ENCODE measurements at regions of chr17 and their contacts with region 1.

Region 1: DNA sequence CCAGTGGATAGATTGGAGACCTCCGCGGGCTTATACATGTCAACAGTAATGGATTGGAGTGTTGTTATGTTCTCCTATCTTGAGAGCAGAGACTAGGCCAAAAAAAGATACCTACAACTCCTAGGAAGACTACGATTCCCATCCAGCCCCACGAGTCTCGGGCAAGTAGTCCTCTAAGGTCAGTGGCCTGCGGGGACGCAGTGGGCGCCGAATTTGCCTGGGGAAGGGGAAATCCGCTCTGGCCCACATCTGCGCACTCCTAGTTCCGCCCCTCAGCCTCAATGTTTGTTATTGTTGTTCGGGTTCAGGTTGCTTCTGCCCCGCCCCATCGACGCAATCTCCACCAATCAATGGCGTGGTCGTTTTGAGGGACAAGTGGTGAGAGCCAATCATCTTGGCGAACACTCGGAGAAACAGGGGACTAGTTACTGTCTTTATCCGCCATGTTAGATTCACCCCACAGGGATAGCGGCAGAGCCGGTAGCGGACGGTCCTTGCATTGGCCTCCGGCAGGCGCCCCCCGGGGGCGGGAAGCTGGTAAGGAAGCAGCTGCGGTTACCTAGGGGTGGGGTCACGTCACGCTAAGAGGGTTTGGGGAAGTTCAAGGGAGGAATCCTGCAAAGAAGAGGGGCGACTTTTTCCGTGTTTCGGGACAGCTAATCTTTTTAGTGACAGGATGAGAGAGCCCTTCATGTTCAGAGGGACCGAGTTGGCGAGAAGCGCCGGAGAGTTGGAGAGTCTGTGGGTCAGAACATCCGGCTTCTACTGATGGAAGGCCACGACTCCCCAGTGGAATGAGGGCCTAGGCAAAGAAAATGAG is at the start of gene NBR1:
- DNase-seq: peak; percentile 93 to 96
- ATAC-seq: peak; percentile 91 to 93 (median 92)
- H3K4me3 ChIP-seq: peak within 1 kb of the TSS; percentile 87
- H3K27ac ChIP-seq: peak within 1 kb of the TSS; percentile 91
- H3K4me1 ChIP-seq: peaks cover 40% of the 10 kb centered on the region
- H3K27me3 ChIP-seq: no peaks in the 10 kb centered on the region
- CTCF ChIP-seq: no peak
- total RNA-seq, gene NBR1: 104 to 157 (median 133) TPM

Region 2: DNA sequence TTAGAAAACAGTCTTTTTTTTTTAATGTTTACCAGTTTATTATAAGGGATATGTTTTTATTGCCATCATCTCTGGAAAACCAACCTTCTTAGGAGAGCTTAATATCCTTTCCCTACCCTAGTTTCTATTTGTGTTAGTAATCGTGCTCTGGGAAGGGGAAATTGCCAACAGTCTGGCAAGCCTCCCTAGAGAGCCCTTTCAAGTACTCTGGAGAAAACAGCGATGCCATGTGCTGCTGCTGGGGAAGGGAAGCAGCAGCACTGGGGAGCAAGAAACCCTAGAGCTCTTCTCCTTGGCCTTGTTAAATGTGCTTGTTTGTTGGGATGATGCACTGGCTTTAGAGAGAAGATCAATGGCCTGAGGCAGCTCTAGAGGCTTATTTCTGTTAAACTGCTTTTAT is 572.1 kb before region 1 on chr17:
- intact Hi-C with region 1: no loop called
- DNase-seq: no peak
- ATAC-seq: peak; percentile 44 to 86 (median 64)
- H3K4me3 ChIP-seq: no peak overlapping the region
- H3K27ac ChIP-seq: peak overlapping the region; percentile 26
- H3K4me1 ChIP-seq: peaks cover 20% of the 10 kb centered on the region
- H3K27me3 ChIP-seq: no peaks in the 10 kb centered on the region
- CTCF ChIP-seq: no peak

Region 3: GRCh38 chr17:43024407-43025289 is 146.3 kb before region 1 on chr17 and contains the start of gene RND2:
- intact Hi-C with region 1: loop called in 1 of 2 experiments (anchors 10 kb)
- DNase-seq: peak; percentile 86 to 87
- ATAC-seq: peak; percentile 49 to 70 (median 69)
- H3K4me3 ChIP-seq: peak within 1 kb of the TSS; percentile 70
- H3K27ac ChIP-seq: no peak within 1 kb of the TSS
- H3K4me1 ChIP-seq: peaks cover 16% of the 10 kb centered on the region
- H3K27me3 ChIP-seq: peaks cover 0 to 3% (median 2%) of the 10 kb centered on the region in 3 donors
- CTCF ChIP-seq: peak; percentile 57
- total RNA-seq, gene RND2: 0.04 to 0.22 (median 0.16) TPM

Region 4: GRCh38 chr17:43051969-43052368 is 119.0 kb before region 1 on chr17:
- intact Hi-C with region 1: no loop called
- DNase-seq: no peak
- ATAC-seq: no peak
- H3K4me3 ChIP-seq: no peak overlapping the region
- H3K27ac ChIP-seq: no peak overlapping the region
- H3K4me1 ChIP-seq: no peaks in the 10 kb centered on the region
- H3K27me3 ChIP-seq: no peaks in the 10 kb centered on the region
- CTCF ChIP-seq: no peak

Region 5: GRCh38 chr17:43125133-43125966 is 45.6 kb before region 1 on chr17 and contains the start of gene BRCA1:
- intact Hi-C with region 1: loop called (anchors 5 kb)
- DNase-seq: peak; percentile 86 to 92
- ATAC-seq: peak; percentile 99 to 100 (median 100)
- H3K4me3 ChIP-seq: peak within 1 kb of the TSS; percentile 71
- H3K27ac ChIP-seq: peak within 1 kb of the TSS; percentile 79
- H3K4me1 ChIP-seq: peaks cover 13% of the 10 kb centered on the region
- H3K27me3 ChIP-seq: no peaks in the 10 kb centered on the region
- CTCF ChIP-seq: no peak
- total RNA-seq, gene BRCA1: 2.3 to 6.1 (median 3.8) TPM

Region 6: GRCh38 chr17:43406676-43407645 is 236.0 kb after region 1 on chr17:
- intact Hi-C with region 1: no loop called
- DNase-seq: no peak
- ATAC-seq: no peak
- H3K4me3 ChIP-seq: no peak overlapping the region
- H3K27ac ChIP-seq: no peak overlapping the region
- H3K4me1 ChIP-seq: no peaks in the 10 kb centered on the region
- H3K27me3 ChIP-seq: no peaks in the 10 kb centered on the region
- CTCF ChIP-seq: no peak